Right cardiac atrium (tissue), 5 donors: ENCODE measurements at regions of chr18 and their contacts with region 1.

Region 1: GRCh38 chr18:46073474-46074331 is 1.6 kb upstream of the PSTPIP2 start:
- DNase-seq: no peak
- ATAC-seq: peak; percentile 19 to 23
- H3K4me3 ChIP-seq: no peak overlapping the region
- H3K27ac ChIP-seq: no peak overlapping the region
- H3K4me1 ChIP-seq: no peaks in the 10 kb centered on the region
- H3K27me3 ChIP-seq: no peaks in the 10 kb centered on the region

Region 2: DNA sequence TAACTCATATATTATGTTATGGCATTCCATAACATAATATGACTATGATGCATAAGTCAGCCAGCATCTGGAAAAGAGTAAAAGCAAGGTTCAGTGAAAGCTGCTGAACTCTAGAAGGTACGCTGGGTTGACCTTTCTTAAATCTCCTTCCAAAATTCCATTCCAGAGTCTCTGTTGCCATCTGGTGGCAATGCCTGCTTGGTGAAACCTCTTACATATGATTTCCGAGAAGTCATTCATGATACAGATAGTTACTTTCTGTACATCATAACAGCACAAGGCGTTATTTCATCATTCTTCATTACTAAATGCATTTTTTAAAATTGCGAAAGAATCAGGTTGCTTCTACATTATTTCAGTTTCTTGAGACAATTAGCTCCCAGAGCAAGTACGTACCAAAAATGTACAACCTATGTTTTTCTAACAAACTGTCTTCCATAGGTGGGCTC is 99.6 kb before region 1 on chr18:
- intact Hi-C with region 1: loop called in 1 of 4 experiments (anchors 10 kb)
- DNase-seq: peak in 2 of 3 donors; percentile 30 to 66
- ATAC-seq: peak; percentile 81 to 83
- H3K4me3 ChIP-seq: no peak overlapping the region
- H3K27ac ChIP-seq: no peak overlapping the region
- H3K4me1 ChIP-seq: no peaks in the 10 kb centered on the region
- H3K27me3 ChIP-seq: no peaks in the 10 kb centered on the region

Region 3: GRCh38 chr18:46034230-46034629 is 39.5 kb before region 1 on chr18:
- intact Hi-C with region 1: no loop called
- DNase-seq: no peak
- ATAC-seq: peak in 1 of 2 donors; percentile 37
- H3K4me3 ChIP-seq: no peak overlapping the region
- H3K27ac ChIP-seq: no peak overlapping the region
- H3K4me1 ChIP-seq: no peaks in the 10 kb centered on the region
- H3K27me3 ChIP-seq: no peaks in the 10 kb centered on the region

Region 4: GRCh38 chr18:46155641-46156051 is 81.9 kb after region 1 on chr18:
- intact Hi-C with region 1: no loop called
- DNase-seq: no peak
- ATAC-seq: no peak
- H3K4me3 ChIP-seq: no peak overlapping the region
- H3K27ac ChIP-seq: no peak overlapping the region
- H3K4me1 ChIP-seq: peaks cover 2% of the 10 kb centered on the region
- H3K27me3 ChIP-seq: no peaks in the 10 kb centered on the region

Region 5: GRCh38 chr18:46531482-46531881 is 457.8 kb after region 1 on chr18:
- intact Hi-C with region 1: no loop called
- DNase-seq: no peak
- ATAC-seq: no peak
- H3K4me3 ChIP-seq: no peak overlapping the region
- H3K27ac ChIP-seq: no peak overlapping the region
- H3K4me1 ChIP-seq: peaks cover 2% of the 10 kb centered on the region
- H3K27me3 ChIP-seq: no peaks in the 10 kb centered on the region